ENCODE measurements at regions of chr1 and their contacts with region 1.

Region 1: DNA sequence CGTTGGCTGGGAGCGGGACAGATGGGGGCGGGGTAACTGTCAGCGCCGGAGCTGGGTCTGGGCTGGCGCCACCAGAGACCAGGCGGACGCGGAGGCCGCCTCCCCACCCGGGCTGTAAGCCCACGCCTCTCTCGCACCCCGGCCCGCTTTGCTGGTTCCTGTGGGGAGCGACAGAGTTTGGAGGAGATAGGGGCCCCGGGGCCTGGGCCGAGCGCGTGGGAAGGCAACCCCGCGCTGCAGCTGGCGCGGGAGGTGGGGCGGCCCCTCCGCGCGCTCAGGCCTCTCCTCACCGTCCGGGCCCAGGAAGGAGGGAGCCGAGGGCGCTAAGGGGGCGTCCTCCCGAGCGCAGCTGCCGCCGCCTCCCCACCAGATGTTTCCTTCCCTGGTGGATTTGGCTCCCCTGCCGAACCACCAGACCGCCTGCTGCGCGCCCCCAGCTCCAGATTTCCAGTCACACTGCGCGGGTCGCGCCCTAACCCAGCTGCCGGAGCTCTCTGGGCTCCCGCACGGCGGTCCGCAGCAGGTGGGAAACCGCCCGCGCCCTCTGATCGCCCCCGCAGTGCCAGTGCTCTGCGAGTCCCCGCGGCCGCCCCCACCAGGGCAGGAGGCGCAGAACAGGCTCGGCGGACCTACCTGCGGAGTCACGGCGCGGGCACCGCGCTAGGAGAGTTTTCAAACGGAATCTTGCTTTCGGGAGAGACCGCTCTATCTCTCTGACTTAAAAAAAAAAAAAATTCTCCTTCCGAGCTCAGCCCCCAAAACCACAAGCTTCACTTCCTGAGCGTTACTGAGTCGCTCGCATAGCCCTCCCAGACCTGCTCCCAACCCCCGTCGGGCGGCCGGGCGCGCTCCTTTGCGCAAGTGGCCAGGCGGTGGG is 1.1 kb downstream of the GFI1 start:
- DNase-seq: peak; percentile 66 to 90 (median 83)
- ATAC-seq: peak; percentile 64
- H3K4me3 ChIP-seq: peak overlapping the region; percentile 84 to 94
- H3K4me3 Mint-ChIP-seq: peak overlapping the region; percentile 95
- H3K27ac ChIP-seq: peak overlapping the region; percentile 67 to 73
- H3K27ac Mint-ChIP-seq: peak overlapping the region; percentile 94
- H3K4me1 ChIP-seq: peaks cover 42% of the 10 kb centered on the region
- H3K4me1 Mint-ChIP-seq: peaks cover 39% of the 10 kb centered on the region
- H3K27me3 ChIP-seq: no peaks in the 10 kb centered on the region
- H3K27me3 Mint-ChIP-seq: no peaks in the 10 kb centered on the region
- CTCF ChIP-seq: peak; percentile 42

Region 2: GRCh38 chr1:91021686-91022517 is 1463.7 kb before region 1 on chr1 and contains the start of gene ZNF644:
- CTCF ChIA-PET with region 1: no interaction called
- POLR2A ChIA-PET with region 1: no interaction called
- intact Hi-C with region 1: loop called in 1 of 2 experiments (anchors 10 kb)
- DNase-seq: peak; percentile 76 to 97 (median 89)
- ATAC-seq: peak; percentile 84
- H3K4me3 ChIP-seq: peak within 1 kb of the TSS; percentile 75 to 98
- H3K4me3 Mint-ChIP-seq: peak within 1 kb of the TSS; percentile 97
- H3K27ac ChIP-seq: peak within 1 kb of the TSS; percentile 99 to 100
- H3K27ac Mint-ChIP-seq: peak within 1 kb of the TSS; percentile 99
- H3K4me1 ChIP-seq: peaks cover 49% of the 10 kb centered on the region
- H3K4me1 Mint-ChIP-seq: peaks cover 64% of the 10 kb centered on the region
- H3K27me3 ChIP-seq: no peaks in the 10 kb centered on the region
- H3K27me3 Mint-ChIP-seq: no peaks in the 10 kb centered on the region
- CTCF ChIP-seq: no peak
- total RNA-seq, gene ZNF644: 105 to 109 TPM

Region 3: GRCh38 chr1:91751275-91751674 is 734.3 kb before region 1 on chr1:
- CTCF ChIA-PET with region 1: no interaction called
- POLR2A ChIA-PET with region 1: no interaction called
- intact Hi-C with region 1: no loop called
- DNase-seq: no peak
- ATAC-seq: no peak
- H3K4me3 ChIP-seq: no peak overlapping the region
- H3K4me3 Mint-ChIP-seq: no peak overlapping the region
- H3K27ac ChIP-seq: no peak overlapping the region
- H3K27ac Mint-ChIP-seq: no peak overlapping the region
- H3K4me1 ChIP-seq: no peaks in the 10 kb centered on the region
- H3K4me1 Mint-ChIP-seq: peaks cover 21% of the 10 kb centered on the region
- H3K27me3 ChIP-seq: no peaks in the 10 kb centered on the region
- H3K27me3 Mint-ChIP-seq: no peaks in the 10 kb centered on the region
- CTCF ChIP-seq: no peak

Region 4: DNA sequence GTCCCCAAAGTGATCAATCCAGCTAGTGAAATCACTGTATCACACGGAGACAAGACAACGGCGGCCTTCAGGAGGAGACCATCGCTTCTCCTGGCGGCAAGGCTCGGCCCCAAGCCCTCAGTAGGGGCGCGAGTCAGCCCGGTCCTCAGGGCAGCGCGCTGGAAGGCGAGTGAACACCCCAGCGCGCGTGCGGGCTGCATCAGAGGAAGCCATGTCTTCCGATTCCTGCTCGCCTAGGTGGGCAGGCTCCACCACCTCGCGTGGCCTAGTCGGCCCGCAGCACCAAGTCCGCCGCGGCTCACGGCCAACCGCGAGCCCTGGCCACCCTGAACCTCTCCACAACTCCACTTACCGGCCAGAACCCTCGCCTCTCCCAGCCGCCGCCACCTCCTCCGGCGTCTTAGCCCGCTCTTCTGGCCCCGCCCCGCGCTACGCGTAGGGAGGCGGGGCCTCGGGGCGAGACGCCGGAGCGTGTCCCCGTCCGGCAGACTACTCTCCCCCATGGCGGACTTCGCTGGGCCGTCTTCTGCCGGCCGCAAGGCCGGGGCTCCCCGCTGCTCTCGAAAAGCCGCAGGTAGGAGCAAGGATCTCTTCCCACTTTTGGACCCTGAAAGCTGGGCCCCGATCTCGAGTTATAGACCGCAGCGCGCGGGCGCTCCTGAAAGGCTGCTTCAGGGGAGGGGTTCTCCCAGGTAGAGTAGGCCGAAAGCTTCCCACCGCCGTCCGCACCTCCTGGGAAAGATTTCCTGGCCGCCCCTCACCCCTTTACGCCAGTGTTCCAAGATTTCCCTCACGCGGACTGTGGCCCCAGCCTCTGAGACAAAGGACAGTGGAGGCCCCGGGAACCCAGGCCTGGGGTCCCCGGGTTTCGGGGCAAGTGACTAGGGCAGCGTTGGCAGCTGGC is 186.8 kb before region 1 on chr1 and contains the starts of genes GLMN and RPAP2:
- CTCF ChIA-PET with region 1: interaction called, 6 read pairs
- POLR2A ChIA-PET with region 1: interaction called, 3 read pairs
- intact Hi-C with region 1: loop called (anchors 2 to 5 kb)
- DNase-seq: peak; percentile 41 to 88 (median 68)
- ATAC-seq: peak; percentile 96
- H3K4me3 ChIP-seq: peak within 1 kb of the TSS; percentile 76 to 90
- H3K4me3 Mint-ChIP-seq: peak within 1 kb of the TSS; percentile 94
- H3K27ac ChIP-seq: peak within 1 kb of the TSS; percentile 74 to 93
- H3K27ac Mint-ChIP-seq: peak within 1 kb of the TSS; percentile 98
- H3K4me1 ChIP-seq: peaks cover 13% of the 10 kb centered on the region
- H3K4me1 Mint-ChIP-seq: peaks cover 52% of the 10 kb centered on the region
- H3K27me3 ChIP-seq: no peaks in the 10 kb centered on the region
- H3K27me3 Mint-ChIP-seq: no peaks in the 10 kb centered on the region
- CTCF ChIP-seq: no peak
- total RNA-seq, gene GLMN: 9.2 to 9.5 TPM
- total RNA-seq, gene RPAP2: 29.4 to 33.9 TPM

Region 5: DNA sequence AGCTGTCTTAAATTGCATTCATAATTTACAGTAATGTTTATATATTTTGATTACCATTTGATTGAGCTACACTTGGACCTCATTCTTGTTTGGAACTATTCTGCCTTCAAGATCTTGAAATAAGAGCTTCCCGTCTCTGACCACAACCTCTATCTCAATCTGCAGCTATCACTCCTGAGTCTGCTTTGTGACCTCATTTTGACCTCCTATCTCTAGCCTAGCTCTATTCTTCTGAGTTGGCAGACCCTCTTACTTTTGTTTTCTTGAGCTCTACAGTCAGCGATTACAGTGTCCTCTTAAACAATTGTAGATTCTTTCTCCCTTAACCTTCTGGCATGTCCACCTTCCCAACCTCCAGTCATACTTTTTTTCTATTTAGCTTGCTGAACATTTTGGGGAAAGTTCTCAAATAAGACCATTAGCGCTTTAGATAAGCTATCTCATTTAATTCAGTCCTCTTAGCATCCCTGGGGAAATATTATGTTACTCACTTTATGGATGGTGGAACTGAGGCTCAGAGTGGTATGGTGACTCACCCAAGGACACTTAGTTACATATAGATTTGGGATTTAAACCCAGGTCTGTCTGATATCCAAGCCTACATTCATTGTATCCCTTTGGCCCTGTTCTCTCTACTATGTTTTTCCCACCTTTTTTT is 167.7 kb before region 1 on chr1:
- CTCF ChIA-PET with region 1: interaction called, 29 read pairs
- POLR2A ChIA-PET with region 1: interaction called, 32 read pairs
- intact Hi-C with region 1: loop called in 1 of 2 experiments (anchors 5 kb)
- DNase-seq: peak in 3 of 9 experiments; percentile 14 to 75 (median 62)
- ATAC-seq: peak; percentile 37
- H3K4me3 ChIP-seq: no peak overlapping the region
- H3K4me3 Mint-ChIP-seq: peak overlapping the region; percentile 64
- H3K27ac ChIP-seq: peak overlapping the region; percentile 12 to 47
- H3K27ac Mint-ChIP-seq: peak overlapping the region; percentile 91
- H3K4me1 ChIP-seq: peaks cover 58% of the 10 kb centered on the region
- H3K4me1 Mint-ChIP-seq: peaks cover 59% of the 10 kb centered on the region
- H3K27me3 ChIP-seq: no peaks in the 10 kb centered on the region
- H3K27me3 Mint-ChIP-seq: no peaks in the 10 kb centered on the region
- CTCF ChIP-seq: no peak

Region 6: DNA sequence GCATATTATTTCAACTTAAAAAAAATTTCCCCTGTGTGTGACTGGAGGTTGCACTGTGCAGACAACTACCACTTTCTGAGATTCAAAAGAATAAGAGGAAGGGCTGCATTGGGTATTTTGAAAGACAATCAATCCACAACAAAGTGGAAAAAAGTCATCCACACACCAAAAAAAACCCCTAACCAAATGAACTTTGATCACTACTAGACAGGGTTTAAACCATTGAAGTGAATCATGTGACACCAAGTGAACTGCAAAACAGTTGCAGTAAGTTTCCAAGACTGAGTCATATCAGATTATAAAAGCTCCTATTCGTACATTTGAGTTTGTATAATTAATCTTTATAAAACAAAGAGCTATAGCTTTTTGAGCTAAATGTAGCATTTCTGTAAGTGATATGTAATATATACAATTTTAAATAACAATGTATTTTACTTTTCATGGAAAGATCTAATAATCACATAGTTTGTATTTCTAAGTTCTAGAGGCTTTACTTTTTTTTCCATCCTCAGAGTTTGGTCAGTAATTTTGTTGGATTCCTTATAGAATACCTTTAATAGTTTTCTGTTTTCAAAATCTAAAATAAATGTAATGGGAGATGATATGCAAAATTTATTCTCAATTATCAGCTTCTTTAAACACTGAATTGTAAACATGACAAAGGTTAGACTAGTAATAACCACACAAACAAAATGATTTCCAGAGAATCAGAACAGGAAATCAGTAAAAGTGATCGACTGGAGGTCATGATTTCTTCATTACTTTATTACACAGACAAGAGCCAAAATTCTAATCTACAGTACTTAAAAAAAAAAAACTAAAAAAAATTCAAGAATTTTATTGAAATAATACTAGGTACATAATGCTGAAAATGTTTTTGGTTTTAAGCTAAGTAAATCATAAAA is 51.6 kb after region 1 on chr1:
- CTCF ChIA-PET with region 1: interaction called, 19 read pairs
- POLR2A ChIA-PET with region 1: interaction called, 38 read pairs
- intact Hi-C with region 1: loop called (anchors 1 to 2 kb)
- DNase-seq: peak in 3 of 9 experiments; percentile 22 to 86 (median 76)
- ATAC-seq: peak; percentile 78
- H3K4me3 ChIP-seq: peak overlapping the region in 1 of 2 experiments; percentile 9
- H3K4me3 Mint-ChIP-seq: peak overlapping the region; percentile 56
- H3K27ac ChIP-seq: peak overlapping the region; percentile 12 to 83
- H3K27ac Mint-ChIP-seq: peak overlapping the region; percentile 89
- H3K4me1 ChIP-seq: peaks cover 27% of the 10 kb centered on the region
- H3K4me1 Mint-ChIP-seq: peaks cover 60% of the 10 kb centered on the region
- H3K27me3 ChIP-seq: no peaks in the 10 kb centered on the region
- H3K27me3 Mint-ChIP-seq: no peaks in the 10 kb centered on the region
- CTCF ChIP-seq: no peak

Region 7: DNA sequence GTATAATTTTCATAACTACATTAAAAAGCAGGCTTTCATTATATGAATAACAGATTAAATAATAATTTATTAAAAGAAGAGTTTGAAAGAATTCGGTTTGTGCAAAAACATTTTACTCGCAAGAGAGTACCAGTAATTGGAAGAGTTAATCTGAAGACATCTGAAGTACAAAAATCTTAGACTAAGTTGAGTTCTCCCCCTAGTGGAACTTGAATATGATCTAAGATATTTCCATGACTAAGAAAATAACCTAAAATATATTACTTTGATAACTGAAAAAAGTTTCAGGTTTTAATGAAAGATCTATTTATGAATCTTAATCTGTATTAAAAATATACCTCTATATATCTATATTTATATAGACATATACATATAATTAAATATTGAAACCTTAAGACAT is 113.6 kb after region 1 on chr1:
- CTCF ChIA-PET with region 1: interaction called, 12 read pairs
- POLR2A ChIA-PET with region 1: interaction called, 14 read pairs
- intact Hi-C with region 1: loop called (anchors 1 to 5 kb)
- DNase-seq: peak in 2 of 9 experiments; percentile 55 to 70
- ATAC-seq: peak; percentile 59
- H3K4me3 ChIP-seq: no peak overlapping the region
- H3K4me3 Mint-ChIP-seq: no peak overlapping the region
- H3K27ac ChIP-seq: no peak overlapping the region
- H3K27ac Mint-ChIP-seq: no peak overlapping the region
- H3K4me1 ChIP-seq: no peaks in the 10 kb centered on the region
- H3K4me1 Mint-ChIP-seq: peaks cover 2% of the 10 kb centered on the region
- H3K27me3 ChIP-seq: no peaks in the 10 kb centered on the region
- H3K27me3 Mint-ChIP-seq: no peaks in the 10 kb centered on the region
- CTCF ChIP-seq: peak; percentile 91

Region 8: GRCh38 chr1:93502561-93502960 is 1016.9 kb after region 1 on chr1:
- CTCF ChIA-PET with region 1: no interaction called
- POLR2A ChIA-PET with region 1: no interaction called
- intact Hi-C with region 1: no loop called
- DNase-seq: no peak
- ATAC-seq: no peak
- H3K4me3 ChIP-seq: no peak overlapping the region
- H3K4me3 Mint-ChIP-seq: no peak overlapping the region
- H3K27ac ChIP-seq: no peak overlapping the region
- H3K27ac Mint-ChIP-seq: no peak overlapping the region
- H3K4me1 ChIP-seq: no peaks in the 10 kb centered on the region
- H3K4me1 Mint-ChIP-seq: no peaks in the 10 kb centered on the region
- H3K27me3 ChIP-seq: peaks cover 0 to 1% of the 10 kb centered on the region in 2 experiments
- H3K27me3 Mint-ChIP-seq: peaks cover 8% of the 10 kb centered on the region
- CTCF ChIP-seq: no peak

Measured in CD8-positive, alpha-beta T cell (primary cell).